ENCODE measurements at regions of chr2 and their contacts with region 1.

Region 1: GRCh38 chr2:33583194-33583938 is 15.7 kb downstream of the FAM98A start:
- DNase-seq: no peak
- ATAC-seq: peak; percentile 71
- H3K4me3 Mint-ChIP-seq: no peak overlapping the region
- H3K27ac Mint-ChIP-seq: peak overlapping the region; percentile 71
- H3K4me1 Mint-ChIP-seq: peaks cover 24% of the 10 kb centered on the region
- H3K27me3 Mint-ChIP-seq: no peaks in the 10 kb centered on the region
- CTCF ChIP-seq: peak; percentile 93

Region 2: DNA sequence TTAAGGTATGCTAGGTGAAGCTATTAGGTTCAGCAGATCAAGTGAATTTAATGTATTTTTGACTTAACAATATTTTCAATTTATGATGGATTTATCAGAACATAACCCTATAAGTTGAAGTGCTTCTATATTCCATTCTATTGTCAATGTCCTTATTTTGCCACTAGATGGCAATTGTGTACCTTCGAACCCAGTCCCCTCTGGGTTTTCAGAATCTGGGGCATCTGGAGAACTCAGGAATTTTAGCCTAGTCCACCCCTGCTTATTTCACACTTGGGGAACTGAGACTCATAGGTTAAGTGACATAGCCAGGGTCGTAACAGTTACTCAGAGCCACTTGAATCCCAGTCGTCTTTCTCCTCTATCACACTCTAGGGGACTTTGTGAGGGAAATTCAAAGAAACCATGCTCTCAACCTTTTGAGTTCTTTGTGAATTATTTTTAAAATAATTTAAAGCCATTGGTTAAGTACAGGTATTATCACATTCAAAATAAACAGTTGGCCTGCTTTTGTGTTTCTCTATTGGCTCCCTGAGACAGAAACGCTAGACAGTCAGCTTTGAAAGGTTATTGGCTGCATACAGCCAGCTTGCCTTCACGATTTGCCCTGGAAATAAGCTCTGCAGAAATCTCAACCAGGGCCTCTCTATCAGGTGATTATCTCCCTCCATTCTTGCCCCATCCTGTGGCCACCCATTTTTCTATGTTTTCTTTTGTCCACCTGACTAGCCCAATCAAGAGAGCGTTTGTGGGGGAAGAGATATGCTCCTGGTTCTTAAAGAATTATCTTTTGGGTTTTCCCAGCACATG is 810.5 kb before region 1 on chr2:
- CTCF ChIA-PET with region 1: interaction called, 14 read pairs
- POLR2A ChIA-PET with region 1: no interaction called
- intact Hi-C with region 1: loop called (anchors 1 kb)
- DNase-seq: no peak
- ATAC-seq: no peak
- H3K4me3 Mint-ChIP-seq: no peak overlapping the region
- H3K27ac Mint-ChIP-seq: no peak overlapping the region
- H3K4me1 Mint-ChIP-seq: no peaks in the 10 kb centered on the region
- H3K27me3 Mint-ChIP-seq: no peaks in the 10 kb centered on the region
- CTCF ChIP-seq: no peak

Region 3: GRCh38 chr2:33086400-33087015 is 496.9 kb before region 1 on chr2:
- CTCF ChIA-PET with region 1: no interaction called
- POLR2A ChIA-PET with region 1: interaction called, 10 read pairs
- intact Hi-C with region 1: no loop called
- DNase-seq: no peak
- ATAC-seq: no peak
- H3K4me3 Mint-ChIP-seq: no peak overlapping the region
- H3K27ac Mint-ChIP-seq: no peak overlapping the region
- H3K4me1 Mint-ChIP-seq: peaks cover 32% of the 10 kb centered on the region
- H3K27me3 Mint-ChIP-seq: no peaks in the 10 kb centered on the region
- CTCF ChIP-seq: no peak

Region 4: DNA sequence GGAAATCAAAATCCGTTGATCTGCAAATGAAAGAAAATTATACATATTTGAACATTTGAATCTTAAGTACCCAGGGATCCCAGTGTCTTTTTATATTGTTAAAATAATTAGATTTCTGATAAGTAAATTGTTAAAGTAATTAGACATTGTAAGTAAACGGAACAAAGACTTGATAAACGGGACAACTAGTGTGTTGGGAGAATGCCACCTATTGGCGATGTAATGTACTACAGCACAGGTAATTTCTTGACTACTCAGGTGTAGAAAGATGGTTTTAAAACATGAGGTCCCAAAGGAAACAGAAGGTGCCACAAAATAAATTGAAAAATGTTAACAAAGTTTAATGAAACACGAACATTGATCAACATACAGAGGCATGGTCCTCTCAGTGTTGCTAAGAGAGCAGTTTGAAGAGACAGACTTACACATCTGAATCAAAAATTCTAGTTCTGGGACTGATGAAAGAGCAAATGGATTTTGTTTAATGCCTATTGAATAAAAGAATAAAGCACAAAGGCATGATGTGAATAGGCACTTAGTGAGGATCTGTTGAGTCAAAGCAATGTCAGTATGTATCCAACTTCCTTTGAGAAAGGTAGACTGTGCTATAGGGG is 210.3 kb before region 1 on chr2:
- CTCF ChIA-PET with region 1: interaction called, 14 read pairs
- POLR2A ChIA-PET with region 1: no interaction called
- intact Hi-C with region 1: loop called (anchors 1 kb)
- DNase-seq: no peak
- ATAC-seq: peak; percentile 52
- H3K4me3 Mint-ChIP-seq: no peak overlapping the region
- H3K27ac Mint-ChIP-seq: no peak overlapping the region
- H3K4me1 Mint-ChIP-seq: no peaks in the 10 kb centered on the region
- H3K27me3 Mint-ChIP-seq: no peaks in the 10 kb centered on the region
- CTCF ChIP-seq: peak; percentile 84

Region 5: GRCh38 chr2:33529771-33530351 is 53.5 kb before region 1 on chr2:
- CTCF ChIA-PET with region 1: interaction called, 3 read pairs
- POLR2A ChIA-PET with region 1: no interaction called
- intact Hi-C with region 1: loop called (anchors 5 kb)
- DNase-seq: no peak
- ATAC-seq: peak; percentile 33
- H3K4me3 Mint-ChIP-seq: peak overlapping the region; percentile 57
- H3K27ac Mint-ChIP-seq: peak overlapping the region; percentile 98
- H3K4me1 Mint-ChIP-seq: peaks cover 89% of the 10 kb centered on the region
- H3K27me3 Mint-ChIP-seq: no peaks in the 10 kb centered on the region
- CTCF ChIP-seq: no peak

Measured in activated B cell treated with CpG ODN at 0.5 μM for 24 hours (primary cell).